ENCODE measurements at regions of chr4 and their contacts with region 1.

Region 1: DNA sequence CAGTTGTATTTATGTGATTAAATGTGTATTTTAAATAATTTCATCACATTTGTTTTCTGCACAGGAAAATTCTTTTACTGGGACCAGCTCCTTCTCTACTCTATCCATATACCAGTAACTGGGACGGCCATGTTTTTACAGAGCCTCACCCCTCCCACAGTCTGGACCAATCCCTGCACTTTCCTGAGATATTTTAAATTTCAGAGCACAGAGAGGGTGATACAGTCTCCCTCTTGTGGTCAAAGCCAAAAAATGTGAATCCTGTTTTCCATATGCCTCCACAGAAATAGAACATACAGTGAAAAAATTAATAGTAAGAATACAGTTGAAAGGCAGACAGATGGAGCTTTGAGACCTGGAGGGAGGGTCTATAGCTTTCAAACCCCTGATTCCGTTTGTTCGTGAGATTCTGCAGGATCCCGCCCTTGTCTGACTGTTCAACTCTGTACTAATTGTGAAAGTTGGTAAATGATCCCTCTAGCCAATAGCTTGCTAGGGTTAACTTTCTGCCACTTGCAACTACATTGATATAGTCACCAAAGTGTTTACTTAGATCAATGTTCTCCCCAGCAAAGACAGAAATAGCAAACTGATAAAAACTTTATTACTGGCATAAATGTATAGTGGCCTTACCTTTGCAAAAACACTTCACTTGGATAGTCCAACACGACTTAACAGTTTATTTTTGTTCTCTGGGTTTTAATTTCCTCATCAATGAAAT is 172.2 kb downstream of the PPARGC1A start:
- DNase-seq: peak; percentile 43
- ATAC-seq: no peak
- H3K4me3 ChIP-seq: no peak overlapping the region
- H3K27ac ChIP-seq: no peak overlapping the region
- H3K4me1 ChIP-seq: no peaks in the 10 kb centered on the region
- H3K27me3 ChIP-seq: no peaks in the 10 kb centered on the region
- CTCF ChIP-seq: peak; percentile 57

Region 2: GRCh38 chr4:22897520-22898108 is 820.1 kb before region 1 on chr4:
- CTCF ChIA-PET with region 1: no interaction called
- POLR2A ChIA-PET with region 1: no interaction called
- intact Hi-C with region 1: loop called (anchors 5 kb)
- DNase-seq: peak; percentile 34
- ATAC-seq: no peak
- H3K4me3 ChIP-seq: no peak overlapping the region
- H3K27ac ChIP-seq: no peak overlapping the region
- H3K4me1 ChIP-seq: no peaks in the 10 kb centered on the region
- H3K27me3 ChIP-seq: no peaks in the 10 kb centered on the region; the same call in 1 of the 2 replicates
- CTCF ChIP-seq: peak; percentile 80

Region 3: DNA sequence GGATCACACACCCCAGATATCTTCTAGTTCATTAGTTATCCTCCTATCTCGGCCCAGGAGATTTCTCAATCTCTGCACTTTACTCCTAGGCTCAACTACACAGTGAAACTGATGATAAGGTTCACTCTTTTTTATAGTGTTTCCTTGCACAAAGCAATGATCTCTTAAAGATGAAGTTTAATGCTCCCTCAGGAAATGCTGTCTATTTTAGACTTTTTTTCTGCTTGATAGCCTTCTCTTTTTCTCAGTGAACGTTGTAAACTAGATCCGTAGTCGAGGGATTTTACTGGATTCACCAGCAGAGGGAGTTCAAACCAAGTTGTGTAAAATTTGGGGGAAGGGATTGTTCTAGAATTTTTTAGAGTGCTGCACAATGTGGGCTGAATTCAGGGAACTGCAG is 755.4 kb before region 1 on chr4:
- CTCF ChIA-PET with region 1: no interaction called
- POLR2A ChIA-PET with region 1: no interaction called
- intact Hi-C with region 1: loop called (anchors 5 kb)
- DNase-seq: peak; percentile 76
- ATAC-seq: peak; percentile 50
- H3K4me3 ChIP-seq: no peak overlapping the region
- H3K27ac ChIP-seq: no peak overlapping the region
- H3K4me1 ChIP-seq: no peaks in the 10 kb centered on the region
- H3K27me3 ChIP-seq: no peaks in the 10 kb centered on the region
- CTCF ChIP-seq: peak; percentile 79

Region 4: DNA sequence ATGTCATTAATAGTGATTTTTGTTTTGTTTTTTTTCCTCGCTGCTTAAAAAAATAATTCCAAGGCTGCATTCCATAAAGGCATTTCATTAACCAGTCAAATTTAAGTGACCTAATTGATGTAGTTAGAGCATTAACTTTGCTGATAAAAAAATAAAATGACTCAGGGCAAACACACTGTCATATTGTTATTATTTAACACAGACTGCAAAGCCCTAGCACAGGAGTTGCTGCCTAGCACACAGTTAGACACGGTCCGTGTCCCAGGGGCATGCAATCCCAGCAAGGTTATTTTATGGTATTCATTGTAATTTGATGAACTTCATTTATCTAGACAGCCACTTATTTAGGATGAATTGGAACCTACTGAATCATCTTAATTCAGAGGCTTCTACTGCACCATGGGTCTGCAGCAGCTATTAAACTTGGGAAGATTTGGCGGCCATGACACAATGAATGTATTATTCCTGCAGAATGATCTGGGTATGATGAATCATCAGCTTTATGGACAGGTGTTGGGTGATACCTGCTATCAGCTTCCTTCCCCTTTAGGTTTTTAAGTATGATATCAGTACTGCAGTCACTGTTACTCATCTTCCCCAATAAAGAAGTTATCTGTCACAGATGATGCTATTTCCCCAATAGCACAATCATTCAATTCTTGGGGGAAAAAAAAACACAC is 10.6 kb before region 1 on chr4:
- CTCF ChIA-PET with region 1: no interaction called
- POLR2A ChIA-PET with region 1: interaction called, 16 read pairs
- intact Hi-C with region 1: no loop called
- DNase-seq: no peak
- ATAC-seq: no peak
- H3K4me3 ChIP-seq: no peak overlapping the region
- H3K27ac ChIP-seq: no peak overlapping the region
- H3K4me1 ChIP-seq: no peaks in the 10 kb centered on the region
- H3K27me3 ChIP-seq: no peaks in the 10 kb centered on the region
- CTCF ChIP-seq: no peak

Region 5: GRCh38 chr4:24419181-24420034 is 701.7 kb after region 1 on chr4:
- CTCF ChIA-PET with region 1: no interaction called
- POLR2A ChIA-PET with region 1: no interaction called
- intact Hi-C with region 1: loop called (anchors 5 kb)
- DNase-seq: peak; percentile 77
- ATAC-seq: peak; percentile 86
- H3K4me3 ChIP-seq: no peak overlapping the region
- H3K27ac ChIP-seq: no peak overlapping the region
- H3K4me1 ChIP-seq: no peaks in the 10 kb centered on the region
- H3K27me3 ChIP-seq: peaks cover 10% of the 10 kb centered on the region; the same call in 1 of the 2 replicates
- CTCF ChIP-seq: peak; percentile 89

Measured in PC-3 (cell line).